ENCODE measurements at regions of chr7 and their contacts with region 1.

Region 1: GRCh38 chr7:128791121-128791961 is 427 bp upstream of the CCDC136 start:
- DNase-seq: peak; percentile 74 to 91 (median 78)
- ATAC-seq: peak; percentile 17 to 92 (median 80)
- H3K4me3 ChIP-seq: peak overlapping the region; percentile 62 to 94 (median 78)
- H3K27ac ChIP-seq: peak overlapping the region in 7 of 12 donors; percentile 39 to 88 (median 55)
- H3K4me1 ChIP-seq: peaks cover 0 to 30% (median 19%) of the 10 kb centered on the region in 12 donors
- H3K27me3 ChIP-seq: no peaks in the 10 kb centered on the region
- CTCF ChIP-seq: no peak
- POLR2A ChIP-seq: peak in 1 of 2 donors; percentile 51

Region 2: GRCh38 chr7:128739048-128739962 is 52.0 kb before region 1 on chr7 and contains the start of gene CALU:
- intact Hi-C with region 1: loop called in 2 of 10 experiments (anchors 5 kb)
- DNase-seq: peak; percentile 97 to 98 (median 98)
- ATAC-seq: peak; percentile 98 to 99 (median 98)
- H3K4me3 ChIP-seq: peak within 1 kb of the TSS; percentile 83 to 99 (median 94)
- H3K27ac ChIP-seq: peak within 1 kb of the TSS; percentile 30 to 98 (median 94)
- H3K4me1 ChIP-seq: peaks cover 7 to 61% (median 47%) of the 10 kb centered on the region in 12 donors
- H3K27me3 ChIP-seq: no peaks in the 10 kb centered on the region
- CTCF ChIP-seq: no peak
- POLR2A ChIP-seq: peak; percentile 88 to 92
- total RNA-seq, gene CALU: 172 to 689 (median 257) TPM

Region 3: GRCh38 chr7:128830231-128831177 is 39.2 kb after region 1 on chr7 and contains the start of gene FLNC:
- intact Hi-C with region 1: loop called in 5 of 10 experiments (anchors 5 kb)
- DNase-seq: peak; percentile 71 to 81 (median 78)
- ATAC-seq: peak in 2 of 4 donors; percentile 5 to 23
- H3K4me3 ChIP-seq: peak within 1 kb of the TSS; percentile 31 to 94 (median 80)
- H3K27ac ChIP-seq: peak within 1 kb of the TSS; percentile 84 to 100 (median 96)
- H3K4me1 ChIP-seq: peaks cover 0 to 76% (median 45%) of the 10 kb centered on the region in 12 donors
- H3K27me3 ChIP-seq: peaks cover 0 to 31% (median 0%) of the 10 kb centered on the region in 9 donors
- CTCF ChIP-seq: no peak
- POLR2A ChIP-seq: peak; percentile 72 to 96
- total RNA-seq, gene FLNC: 721 to 3,687 (median 1,170) TPM

Region 4: GRCh38 chr7:128862571-128863432 is 71.5 kb after region 1 on chr7 and contains the start of gene ATP6V1F:
- intact Hi-C with region 1: loop called in 3 of 10 experiments (anchors 5 to 10 kb)
- DNase-seq: peak; percentile 97 to 100 (median 98)
- ATAC-seq: peak; percentile 80 to 87 (median 84)
- H3K4me3 ChIP-seq: peak within 1 kb of the TSS; percentile 39 to 91 (median 82)
- H3K27ac ChIP-seq: peak within 1 kb of the TSS in 11 of 12 donors; percentile 47 to 87 (median 73)
- H3K4me1 ChIP-seq: peaks cover 3 to 58% (median 43%) of the 10 kb centered on the region in 12 donors
- H3K27me3 ChIP-seq: no peaks in the 10 kb centered on the region
- CTCF ChIP-seq: peak in 1 of 12 donors; percentile 5
- POLR2A ChIP-seq: peak in 1 of 2 donors; percentile 79
- total RNA-seq, gene ATP6V1F: 91.6 to 165 (median 121) TPM

Region 5: DNA sequence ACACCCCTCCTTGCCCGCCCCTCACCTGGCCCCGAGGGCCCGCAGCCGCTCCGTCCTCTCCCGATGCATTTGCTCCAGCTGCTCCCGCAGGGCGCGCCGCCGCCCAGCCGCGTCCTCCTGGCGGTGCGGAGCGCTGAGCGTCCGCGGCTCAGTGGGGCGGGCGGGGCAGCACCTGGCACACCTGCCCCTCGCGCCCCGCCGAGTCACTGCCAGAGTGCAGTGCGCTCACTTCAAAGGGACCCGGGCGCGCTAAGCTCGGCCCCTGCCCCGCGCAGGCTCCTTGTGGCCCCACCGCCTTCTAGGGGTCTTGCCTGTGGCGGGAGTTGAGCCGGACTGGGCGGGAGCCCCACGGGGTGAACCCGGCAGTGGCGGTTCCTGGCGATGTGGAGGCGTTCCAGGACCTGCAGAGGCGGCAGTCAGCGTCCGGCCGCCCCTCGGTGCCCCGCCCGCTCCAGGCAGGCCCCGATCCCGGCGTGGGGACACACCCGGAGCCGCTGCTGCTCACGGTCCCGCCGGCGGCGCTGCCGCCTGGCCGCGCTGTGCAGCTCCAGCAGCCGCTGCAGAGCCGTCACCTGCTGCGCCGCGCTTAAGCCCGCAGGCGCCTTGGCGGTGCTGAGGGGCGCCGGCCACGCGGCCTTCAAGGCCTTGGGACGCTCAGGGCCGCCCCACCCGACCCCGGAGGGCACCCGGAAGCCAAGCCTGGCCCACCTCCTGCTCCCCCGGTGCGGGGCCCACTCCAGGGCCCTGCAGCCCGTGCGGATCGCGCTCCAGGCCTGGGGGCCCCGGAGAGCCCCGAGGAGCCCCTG is 78.0 kb after region 1 on chr7:
- intact Hi-C with region 1: loop called in 4 of 10 experiments (anchors 5 to 10 kb)
- DNase-seq: peak; percentile 55 to 83 (median 59)
- ATAC-seq: peak; percentile 12 to 75 (median 58)
- H3K4me3 ChIP-seq: peak overlapping the region; percentile 45 to 70 (median 63)
- H3K27ac ChIP-seq: peak overlapping the region in 3 of 12 donors; percentile 15 to 55 (median 38)
- H3K4me1 ChIP-seq: peaks cover 0 to 22% (median 13%) of the 10 kb centered on the region in 12 donors
- H3K27me3 ChIP-seq: peaks cover 0 to 16% (median 0%) of the 10 kb centered on the region in 9 donors
- CTCF ChIP-seq: peak in 7 of 12 donors; percentile 9 to 46 (median 32)
- POLR2A ChIP-seq: no peak

Region 6: DNA sequence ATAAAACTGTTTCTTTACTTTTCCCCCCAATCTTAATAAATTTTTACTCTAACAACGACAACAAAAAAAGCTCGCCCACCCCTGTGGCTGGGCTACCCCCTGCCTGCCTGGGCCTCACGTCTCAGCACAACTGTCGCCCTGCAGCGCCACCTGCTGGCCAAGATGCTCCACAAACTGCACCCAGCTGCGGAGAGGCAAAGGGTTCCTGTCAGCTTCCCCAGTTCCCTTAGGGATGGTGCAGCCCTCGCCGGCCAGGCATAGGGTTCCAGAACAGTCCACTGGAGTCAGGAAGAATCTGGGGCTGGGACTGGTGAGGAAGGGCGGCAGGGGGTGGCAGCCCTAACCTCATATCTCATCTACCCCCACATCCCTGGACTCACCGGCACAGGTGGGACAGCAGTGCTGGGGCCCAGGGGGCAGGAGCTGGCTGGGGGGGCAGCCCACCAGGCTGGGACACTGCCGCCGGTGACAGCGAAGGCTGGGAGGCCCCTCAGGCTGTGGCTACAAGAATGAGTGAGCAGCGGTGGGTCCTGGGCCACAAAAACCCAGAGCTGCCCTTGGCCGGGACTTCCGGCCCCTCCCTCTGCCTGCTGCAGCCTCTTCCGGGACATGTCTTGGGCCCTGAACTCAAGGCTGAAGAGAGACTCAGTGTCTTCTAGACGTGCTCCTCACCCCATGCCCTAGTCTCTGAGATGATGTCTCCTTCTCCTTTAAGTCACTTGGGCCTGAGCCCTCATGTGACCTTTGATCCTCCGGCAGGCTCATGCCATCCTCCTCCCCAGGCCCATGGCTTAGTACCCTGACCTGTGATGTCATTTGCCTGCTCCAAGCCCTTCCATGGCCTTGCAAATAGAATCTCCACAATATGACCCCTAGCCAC is 92.5 kb after region 1 on chr7:
- intact Hi-C with region 1: loop called in 2 of 10 experiments (anchors 5 to 10 kb)
- DNase-seq: peak; percentile 77 to 92 (median 83)
- ATAC-seq: peak; percentile 43 to 72 (median 58)
- H3K4me3 ChIP-seq: peak overlapping the region in 3 of 12 donors; percentile 8 to 33 (median 24)
- H3K27ac ChIP-seq: no peak overlapping the region
- H3K4me1 ChIP-seq: peaks cover 0 to 8% (median 0%) of the 10 kb centered on the region in 12 donors
- H3K27me3 ChIP-seq: no peaks in the 10 kb centered on the region
- CTCF ChIP-seq: peak; percentile 89 to 98 (median 96)
- POLR2A ChIP-seq: no peak

Region 7: GRCh38 chr7:128937647-128938543 is 146.6 kb after region 1 on chr7 and contains the start of gene IRF5:
- intact Hi-C with region 1: no loop called
- DNase-seq: peak; percentile 41 to 84 (median 61)
- ATAC-seq: peak in 2 of 4 donors; percentile 45 to 49
- H3K4me3 ChIP-seq: peak within 1 kb of the TSS; percentile 39 to 64 (median 53)
- H3K27ac ChIP-seq: peak within 1 kb of the TSS in 3 of 12 donors; percentile 50 to 89 (median 55)
- H3K4me1 ChIP-seq: peaks cover 0 to 62% (median 8%) of the 10 kb centered on the region in 12 donors
- H3K27me3 ChIP-seq: peaks cover 0 to 56% (median 20%) of the 10 kb centered on the region in 9 donors
- CTCF ChIP-seq: no peak
- POLR2A ChIP-seq: no peak
- total RNA-seq, gene IRF5: 1.2 to 15.4 (median 1.8) TPM